WTC11 (cell line): ENCODE measurements at regions of chr17 and their contacts with region 1.

Region 1: GRCh38 chr17:32997753-32998632 is 6.3 kb downstream of the SPACA3 start:
- DNase-seq: peak; percentile 92
- ATAC-seq: peak; percentile 96
- H3K4me3 Mint-ChIP-seq: peak overlapping the region; percentile 47
- H3K27ac Mint-ChIP-seq: no peak overlapping the region
- H3K4me1 Mint-ChIP-seq: no peaks in the 10 kb centered on the region; the same call in none of the 2 replicates
- H3K27me3 Mint-ChIP-seq: peaks cover 15% of the 10 kb centered on the region
- CTCF ChIP-seq: peak; percentile 86

Region 2: DNA sequence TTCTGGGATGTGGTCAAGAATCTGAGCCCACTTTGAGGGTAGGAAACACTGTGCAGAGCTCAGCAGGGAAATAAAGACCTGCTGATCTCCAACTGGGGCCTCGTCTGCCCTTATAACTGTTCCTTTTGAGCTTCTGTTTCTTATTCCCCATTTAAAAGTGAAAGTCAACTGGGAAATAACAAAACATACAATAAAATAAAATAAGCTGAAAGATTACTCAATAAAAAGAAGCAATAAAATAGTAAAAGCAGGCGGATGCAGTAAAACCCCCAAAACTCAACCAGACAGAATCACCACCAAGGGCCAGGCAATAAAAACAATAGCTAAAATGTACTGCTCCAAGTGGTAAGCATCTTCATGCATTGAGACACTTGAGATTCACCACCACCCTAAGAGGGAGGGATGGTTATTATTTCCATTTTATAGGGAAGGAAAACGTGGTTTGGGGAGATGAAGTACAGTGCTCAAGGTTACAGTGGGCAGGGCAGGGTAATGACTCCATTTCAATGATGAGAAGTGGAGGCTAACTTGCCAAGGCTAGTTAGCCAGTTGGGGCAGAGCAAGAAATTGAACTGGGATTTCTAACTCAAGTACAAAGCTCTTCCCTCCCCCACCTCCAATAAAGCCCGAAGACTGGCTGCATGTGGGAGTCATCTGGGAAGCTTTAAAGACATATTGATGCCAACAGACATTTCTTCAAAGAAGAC is 12.8 kb before region 1 on chr17:
- CTCF ChIA-PET with region 1: interaction called, 19 read pairs
- POLR2A ChIA-PET with region 1: no interaction called
- DNase-seq: no peak
- ATAC-seq: no peak
- H3K4me3 Mint-ChIP-seq: no peak overlapping the region
- H3K27ac Mint-ChIP-seq: no peak overlapping the region
- H3K4me1 Mint-ChIP-seq: no peaks in the 10 kb centered on the region
- H3K27me3 Mint-ChIP-seq: peaks cover 49% of the 10 kb centered on the region
- CTCF ChIP-seq: no peak

Region 3: GRCh38 chr17:33009636-33010035 is 11.6 kb after region 1 on chr17:
- CTCF ChIA-PET with region 1: interaction called, 15 read pairs
- POLR2A ChIA-PET with region 1: no interaction called
- DNase-seq: no peak
- ATAC-seq: no peak
- H3K4me3 Mint-ChIP-seq: no peak overlapping the region
- H3K27ac Mint-ChIP-seq: no peak overlapping the region
- H3K4me1 Mint-ChIP-seq: peaks cover 9% of the 10 kb centered on the region
- H3K27me3 Mint-ChIP-seq: peaks cover 5% of the 10 kb centered on the region
- CTCF ChIP-seq: no peak

Region 4: GRCh38 chr17:33021731-33022408 is 23.9 kb after region 1 on chr17:
- CTCF ChIA-PET with region 1: interaction called, 17 read pairs
- POLR2A ChIA-PET with region 1: no interaction called
- DNase-seq: no peak
- ATAC-seq: peak; percentile 65
- H3K4me3 Mint-ChIP-seq: no peak overlapping the region
- H3K27ac Mint-ChIP-seq: no peak overlapping the region
- H3K4me1 Mint-ChIP-seq: peaks cover 32% of the 10 kb centered on the region
- H3K27me3 Mint-ChIP-seq: peaks cover 12% of the 10 kb centered on the region; the same call in 1 of the 2 replicates
- CTCF ChIP-seq: peak; percentile 27; the same call in 1 of the 2 replicates

Region 5: GRCh38 chr17:33091271-33091670 is 93.3 kb after region 1 on chr17:
- CTCF ChIA-PET with region 1: no interaction called
- POLR2A ChIA-PET with region 1: no interaction called
- DNase-seq: no peak
- ATAC-seq: no peak
- H3K4me3 Mint-ChIP-seq: no peak overlapping the region
- H3K27ac Mint-ChIP-seq: no peak overlapping the region
- H3K4me1 Mint-ChIP-seq: peaks cover 6% of the 10 kb centered on the region; the same call in 1 of the 2 replicates
- H3K27me3 Mint-ChIP-seq: peaks cover 13% of the 10 kb centered on the region
- CTCF ChIP-seq: no peak